Natural killer cell (primary cell): ENCODE measurements at regions of chr7 and their contacts with region 1.

Region 1: DNA sequence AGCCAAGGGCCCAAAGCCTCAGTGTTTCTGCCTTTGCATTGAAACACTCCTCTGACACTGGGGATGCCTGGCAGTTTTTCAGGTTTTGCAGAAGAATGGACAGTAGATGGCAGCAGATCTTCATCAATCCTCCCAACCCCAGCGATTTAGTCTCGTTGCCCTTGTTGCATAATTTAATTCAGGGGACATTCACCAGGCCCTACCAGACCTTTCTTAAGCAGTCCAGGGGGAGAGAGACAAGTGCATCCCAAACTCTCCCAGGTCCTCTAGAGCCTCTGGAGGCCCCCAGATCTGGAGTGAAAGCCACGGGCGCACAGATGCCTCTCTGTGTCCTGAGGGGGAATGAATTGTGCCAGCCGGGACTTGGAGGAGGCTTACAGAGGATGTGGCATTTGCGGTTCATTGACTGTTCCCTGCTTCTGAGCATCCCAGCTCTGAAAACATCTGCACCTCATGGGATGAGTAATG is 29.6 kb downstream of the MINDY4 start:
- DNase-seq: peak in 1 of 2 donors; percentile 68
- ATAC-seq: peak in 2 of 3 donors; percentile 36 to 54
- H3K4me3 ChIP-seq: no peak overlapping the region
- H3K4me3 Mint-ChIP-seq: no peak overlapping the region
- H3K27ac ChIP-seq: no peak overlapping the region
- H3K27ac Mint-ChIP-seq: no peak overlapping the region
- H3K4me1 ChIP-seq: no peaks in the 10 kb centered on the region
- H3K4me1 Mint-ChIP-seq: peaks cover 0 to 6% of the 10 kb centered on the region in 2 donors
- H3K27me3 ChIP-seq: no peaks in the 10 kb centered on the region
- H3K27me3 Mint-ChIP-seq: peaks cover 0 to 4% of the 10 kb centered on the region in 2 donors
- CTCF ChIP-seq: no peak

Region 2: DNA sequence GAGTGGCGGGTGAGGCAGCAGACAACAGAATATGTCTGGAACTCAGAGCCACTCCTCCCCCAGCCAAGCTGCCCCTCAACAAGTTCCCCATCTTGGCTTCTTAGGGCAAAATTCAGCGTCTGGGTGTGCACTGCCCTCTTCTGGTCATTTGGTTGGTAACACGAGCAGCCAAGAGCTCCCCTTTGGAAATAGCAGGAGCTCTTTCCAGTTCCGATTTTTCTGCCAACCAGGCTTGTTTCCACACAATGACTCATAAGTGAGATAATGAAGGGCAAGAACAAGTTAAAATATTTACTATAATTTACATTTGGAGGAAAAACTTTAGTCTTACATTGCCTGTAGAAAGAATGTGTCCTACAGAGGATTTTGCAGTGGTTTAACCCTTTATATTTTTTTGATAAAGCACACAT is 321.8 kb after region 1 on chr7:
- intact Hi-C with region 1: loop called (anchors 2 kb)
- DNase-seq: peak in 1 of 2 donors; percentile 62
- ATAC-seq: peak in 1 of 3 donors; percentile 52
- H3K4me3 ChIP-seq: no peak overlapping the region
- H3K4me3 Mint-ChIP-seq: no peak overlapping the region
- H3K27ac ChIP-seq: no peak overlapping the region
- H3K27ac Mint-ChIP-seq: no peak overlapping the region
- H3K4me1 ChIP-seq: no peaks in the 10 kb centered on the region
- H3K4me1 Mint-ChIP-seq: no peaks in the 10 kb centered on the region
- H3K27me3 ChIP-seq: no peaks in the 10 kb centered on the region
- H3K27me3 Mint-ChIP-seq: peaks cover 4 to 20% of the 10 kb centered on the region in 2 donors
- CTCF ChIP-seq: peak; percentile 38